Sciatic nerve (tissue), 2 donors: ENCODE measurements at regions of chr12 and their contacts with region 1.

Region 1: DNA sequence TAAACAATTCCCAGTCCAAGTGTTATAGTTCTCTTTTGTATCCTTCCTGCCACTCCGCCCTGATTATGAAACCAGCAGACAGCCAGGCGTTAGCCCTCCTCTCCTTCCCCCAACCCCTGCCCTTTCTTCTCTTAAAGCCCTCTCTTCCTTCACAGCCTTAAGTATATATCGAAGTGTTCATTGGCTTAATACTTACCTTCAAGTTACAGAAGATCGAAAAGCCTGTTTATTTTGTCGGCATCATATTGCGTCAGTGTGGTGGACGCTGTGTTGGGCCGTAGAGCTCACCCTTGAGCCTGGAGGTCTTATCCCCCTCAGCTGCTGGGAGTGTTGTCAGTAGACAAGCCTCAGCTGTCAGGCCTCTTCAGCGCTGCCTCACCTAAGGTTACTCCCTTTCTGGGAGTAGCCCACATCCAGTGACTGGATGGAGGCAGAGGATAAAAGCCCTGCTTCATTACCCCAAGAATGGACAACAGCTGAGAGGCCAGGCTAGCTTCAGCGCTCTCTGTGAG is 36.2 kb downstream of the CMAS start:
- DNase-seq: no peak
- ATAC-seq: no peak

Region 2: GRCh38 chr12:21962236-21962635 is 120.0 kb before region 1 on chr12:
- intact Hi-C with region 1: no loop called
- DNase-seq: no peak
- ATAC-seq: no peak

Region 3: GRCh38 chr12:22334410-22335290 is 252.4 kb after region 1 on chr12 and contains the start of gene ST8SIA1:
- intact Hi-C with region 1: loop called (anchors 1 kb)
- DNase-seq: peak; percentile 62
- ATAC-seq: peak; percentile 45
- total RNA-seq, gene ST8SIA1: 5.5 TPM

Region 4: GRCh38 chr12:22527999-22528398 is 445.8 kb after region 1 on chr12:
- intact Hi-C with region 1: no loop called
- DNase-seq: no peak
- ATAC-seq: no peak